Thyroid gland (tissue), 4 donors: ENCODE measurements at regions of chr20 and their contacts with region 1.

Region 1: DNA sequence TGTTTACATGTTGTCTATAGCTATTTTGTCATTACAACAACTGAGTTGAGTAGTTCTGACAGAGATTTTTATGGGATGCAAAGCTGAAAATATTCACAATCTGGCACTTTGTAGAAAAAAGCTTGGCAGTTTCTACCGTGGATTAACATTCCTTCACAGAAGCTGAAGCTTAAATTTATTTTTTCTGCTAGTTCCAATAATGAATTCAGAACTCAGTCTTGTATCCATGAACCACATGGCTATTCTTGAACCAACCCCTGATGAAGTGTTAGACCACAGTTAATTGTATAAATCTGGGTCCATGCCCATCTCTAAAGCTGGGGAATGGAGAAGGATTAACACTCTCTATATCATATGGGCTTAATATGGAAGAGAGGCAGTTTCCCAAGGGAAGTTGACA is 743.8 kb upstream of the FLRT3 start:
- DNase-seq: no peak
- H3K4me3 ChIP-seq: no peak overlapping the region
- H3K27ac ChIP-seq: no peak overlapping the region
- H3K4me1 ChIP-seq: no peaks in the 10 kb centered on the region
- H3K27me3 ChIP-seq: no peaks in the 10 kb centered on the region
- CTCF ChIP-seq: no peak
- POLR2A ChIP-seq: no peak

Region 2: GRCh38 chr20:15005300-15005986 is 75.8 kb before region 1 on chr20:
- intact Hi-C with region 1: loop called (anchors 10 kb)
- DNase-seq: no peak
- H3K4me3 ChIP-seq: no peak overlapping the region
- H3K27ac ChIP-seq: peak overlapping the region in 1 of 3 donors; percentile 2
- H3K4me1 ChIP-seq: peaks cover 20 to 31% of the 10 kb centered on the region in 2 donors
- H3K27me3 ChIP-seq: no peaks in the 10 kb centered on the region
- CTCF ChIP-seq: no peak
- POLR2A ChIP-seq: no peak